ENCODE measurements at regions of chr17 and their contacts with region 1.

Region 1: GRCh38 chr17:40098846-40099618 is 1.4 kb downstream of the NR1D1 start:
- DNase-seq: peak; percentile 94 to 99 (median 97)
- ATAC-seq: peak; percentile 78
- H3K4me3 ChIP-seq: peak overlapping the region; percentile 97
- H3K4me3 Mint-ChIP-seq: peak overlapping the region; percentile 82 to 99 (median 97)
- H3K27ac ChIP-seq: peak overlapping the region; percentile 94
- H3K27ac Mint-ChIP-seq: peak overlapping the region; percentile 75 to 100 (median 95)
- H3K4me1 ChIP-seq: peaks cover 62 to 69% of the 10 kb centered on the region in 2 donors
- H3K4me1 Mint-ChIP-seq: peaks cover 68 to 96% (median 84%) of the 10 kb centered on the region in 7 donors
- H3K27me3 ChIP-seq: no peaks in the 10 kb centered on the region
- H3K27me3 Mint-ChIP-seq: peaks cover 0 to 6% (median 0%) of the 10 kb centered on the region in 5 donors

Region 2: DNA sequence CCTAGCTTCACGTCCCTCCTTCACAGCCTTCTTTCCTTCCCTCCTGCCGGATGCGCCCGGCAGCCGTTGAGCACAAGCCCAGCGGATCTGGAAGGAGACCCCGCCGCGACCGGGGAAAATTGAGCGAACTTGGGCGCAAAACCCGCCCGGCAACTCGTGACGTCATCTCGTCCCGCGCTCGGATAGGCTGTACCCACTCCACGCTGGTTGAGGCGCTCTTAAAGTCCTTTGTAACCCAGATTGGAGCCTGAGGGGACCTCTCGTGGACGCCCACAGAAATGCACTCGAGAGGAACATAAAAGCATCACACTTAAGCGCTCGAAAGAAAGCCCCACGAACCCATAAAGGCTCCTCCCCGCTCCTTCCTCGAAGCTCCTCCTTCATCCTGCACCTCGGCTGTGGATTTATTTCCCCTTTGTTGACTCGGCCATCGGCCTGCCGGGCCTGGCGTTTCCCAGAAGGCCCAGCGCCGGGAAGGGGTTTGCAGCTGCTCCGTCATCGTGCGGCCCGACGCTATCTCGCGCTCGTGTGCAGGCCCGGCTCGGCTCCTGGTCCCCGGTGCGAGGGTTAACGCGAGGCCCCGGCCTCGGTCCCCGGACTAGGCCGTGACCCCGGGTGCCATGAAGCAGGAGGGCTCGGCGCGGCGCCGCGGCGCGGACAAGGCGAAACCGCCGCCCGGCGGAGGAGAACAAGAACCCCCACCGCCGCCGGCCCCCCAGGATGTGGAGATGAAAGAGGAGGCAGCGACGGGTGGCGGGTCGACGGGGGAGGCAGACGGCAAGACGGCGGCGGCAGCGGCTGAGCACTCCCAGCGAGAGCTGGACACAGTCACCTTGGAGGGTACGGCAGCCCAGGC is 118.5 kb before region 1 on chr17 and contains the start of gene PSMD3:
- CTCF ChIA-PET with region 1: interaction called, 3 read pairs
- POLR2A ChIA-PET with region 1: interaction called, 3 read pairs
- intact Hi-C with region 1: loop called in 1 of 2 experiments (anchors 1 kb)
- DNase-seq: peak; percentile 86 to 99 (median 98)
- ATAC-seq: peak; percentile 97
- H3K4me3 ChIP-seq: peak within 1 kb of the TSS; percentile 63
- H3K4me3 Mint-ChIP-seq: peak within 1 kb of the TSS; percentile 89 to 97 (median 94)
- H3K27ac ChIP-seq: peak within 1 kb of the TSS; percentile 91
- H3K27ac Mint-ChIP-seq: peak within 1 kb of the TSS; percentile 89 to 96 (median 93)
- H3K4me1 ChIP-seq: peaks cover 17 to 23% of the 10 kb centered on the region in 2 donors
- H3K4me1 Mint-ChIP-seq: peaks cover 24 to 50% (median 46%) of the 10 kb centered on the region in 7 donors
- H3K27me3 ChIP-seq: no peaks in the 10 kb centered on the region
- H3K27me3 Mint-ChIP-seq: peaks cover 0 to 13% (median 0%) of the 10 kb centered on the region in 5 donors
- total RNA-seq, gene PSMD3: 55.7 to 111 (median 68.9) TPM

Region 3: DNA sequence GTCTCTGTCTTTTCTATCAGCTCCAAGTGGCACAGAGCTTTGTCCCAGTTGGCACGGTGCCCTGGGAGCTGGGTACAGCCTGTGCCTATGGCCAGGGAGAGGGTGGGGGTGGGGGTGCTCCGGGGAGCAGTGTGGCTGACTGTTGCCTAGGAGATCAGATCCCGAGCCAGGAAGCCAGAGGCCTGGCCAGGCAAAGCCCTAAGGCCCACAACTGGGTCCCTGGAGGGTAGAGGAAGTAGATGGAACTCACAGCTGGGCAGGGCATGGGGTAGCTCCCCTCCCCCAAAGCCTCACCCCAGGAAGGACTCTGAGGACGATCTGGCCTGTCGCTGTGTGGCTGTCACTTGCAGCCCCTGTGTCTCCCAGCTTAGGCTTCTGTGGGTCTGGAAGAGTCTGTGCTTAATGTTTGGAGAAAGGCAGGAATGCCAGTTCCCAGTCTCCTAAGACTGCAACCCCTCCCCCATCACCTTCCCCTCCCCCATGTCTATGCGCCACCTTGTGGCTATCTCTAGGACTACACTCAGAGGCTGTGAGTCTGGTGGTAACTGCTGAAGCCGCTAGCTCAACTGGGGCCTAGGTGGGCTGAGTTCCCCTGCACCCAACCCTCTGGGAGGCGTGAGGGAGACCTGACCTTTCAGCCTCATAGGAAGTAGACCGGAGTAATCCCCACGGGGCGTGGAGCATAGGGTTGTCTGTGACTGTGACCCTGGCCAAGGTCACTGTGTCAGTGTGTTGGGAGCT is 23.7 kb before region 1 on chr17:
- CTCF ChIA-PET with region 1: interaction called, 49 read pairs
- POLR2A ChIA-PET with region 1: interaction called, 25 read pairs
- intact Hi-C with region 1: loop called in 1 of 2 experiments (anchors 2 kb)
- DNase-seq: peak; percentile 45 to 80 (median 63)
- ATAC-seq: peak; percentile 93
- H3K4me3 ChIP-seq: no peak overlapping the region
- H3K4me3 Mint-ChIP-seq: peak overlapping the region in 8 of 10 donors; percentile 35 to 78 (median 71)
- H3K27ac ChIP-seq: peak overlapping the region; percentile 18
- H3K27ac Mint-ChIP-seq: peak overlapping the region in 8 of 9 donors; percentile 42 to 89 (median 68)
- H3K4me1 ChIP-seq: peaks cover 13 to 36% of the 10 kb centered on the region in 2 donors
- H3K4me1 Mint-ChIP-seq: peaks cover 7 to 67% (median 36%) of the 10 kb centered on the region in 7 donors
- H3K27me3 ChIP-seq: no peaks in the 10 kb centered on the region
- H3K27me3 Mint-ChIP-seq: no peaks in the 10 kb centered on the region

Region 4: DNA sequence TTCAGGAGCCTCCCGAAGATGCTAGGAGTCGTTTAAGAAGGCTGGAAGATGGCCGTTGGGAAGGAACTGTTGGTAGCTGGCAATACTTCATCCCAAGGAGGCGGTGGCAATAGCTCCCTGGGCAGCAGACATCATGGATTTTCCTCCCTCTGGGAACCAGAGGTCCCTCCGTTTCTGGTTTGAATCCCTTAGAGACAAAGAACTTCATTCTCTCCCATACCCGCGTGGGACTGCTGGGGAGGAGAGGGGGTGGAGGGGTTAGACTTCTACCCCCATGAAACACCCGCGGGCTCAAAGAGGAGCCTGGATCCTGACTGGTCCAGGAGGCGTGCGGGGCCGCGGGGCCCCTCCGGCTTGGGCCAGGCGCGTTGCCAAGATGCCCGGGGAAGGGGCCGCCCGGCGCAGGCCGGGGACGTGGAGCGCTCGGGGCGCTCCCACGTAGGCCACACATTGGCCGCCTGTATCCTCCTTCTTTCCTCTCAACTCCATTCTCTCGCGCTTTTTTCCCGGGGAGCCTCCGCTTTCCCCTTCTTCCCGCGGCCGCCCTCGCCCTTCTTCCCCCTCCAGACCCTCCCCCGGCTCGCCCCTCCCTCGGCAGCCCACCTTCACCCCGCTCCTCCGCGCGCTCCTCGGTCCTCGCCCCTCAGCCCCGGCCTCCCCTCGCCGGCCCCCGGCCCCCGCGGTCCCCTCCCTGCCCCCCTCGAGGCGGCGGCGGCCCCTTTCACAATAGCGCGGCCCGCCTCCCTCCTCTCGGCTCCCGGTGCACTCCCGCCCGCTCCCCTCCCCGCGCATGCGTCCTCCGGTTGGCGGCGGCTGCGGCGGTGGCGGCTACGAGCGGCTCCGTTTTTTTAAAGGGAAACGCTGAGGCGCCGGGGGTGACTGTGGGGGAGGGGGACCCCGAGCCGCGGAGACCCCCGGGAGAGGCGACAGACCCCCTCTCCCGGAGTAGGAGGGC is 22.4 kb after region 1 on chr17 and contains the start of gene MSL1:
- CTCF ChIA-PET with region 1: interaction called, 6 read pairs
- POLR2A ChIA-PET with region 1: interaction called, 291 read pairs
- intact Hi-C with region 1: loop called (anchors 1 kb)
- DNase-seq: peak; percentile 81 to 95 (median 86)
- ATAC-seq: peak; percentile 82
- H3K4me3 ChIP-seq: peak within 1 kb of the TSS; percentile 86
- H3K4me3 Mint-ChIP-seq: peak within 1 kb of the TSS; percentile 65 to 99 (median 86)
- H3K27ac ChIP-seq: peak within 1 kb of the TSS; percentile 82
- H3K27ac Mint-ChIP-seq: peak within 1 kb of the TSS; percentile 38 to 97 (median 84)
- H3K4me1 ChIP-seq: peaks cover 12 to 16% of the 10 kb centered on the region in 2 donors
- H3K4me1 Mint-ChIP-seq: peaks cover 32 to 47% (median 38%) of the 10 kb centered on the region in 7 donors
- H3K27me3 ChIP-seq: no peaks in the 10 kb centered on the region
- H3K27me3 Mint-ChIP-seq: no peaks in the 10 kb centered on the region
- total RNA-seq, gene MSL1: 97.0 to 145 (median 113) TPM

Region 5: DNA sequence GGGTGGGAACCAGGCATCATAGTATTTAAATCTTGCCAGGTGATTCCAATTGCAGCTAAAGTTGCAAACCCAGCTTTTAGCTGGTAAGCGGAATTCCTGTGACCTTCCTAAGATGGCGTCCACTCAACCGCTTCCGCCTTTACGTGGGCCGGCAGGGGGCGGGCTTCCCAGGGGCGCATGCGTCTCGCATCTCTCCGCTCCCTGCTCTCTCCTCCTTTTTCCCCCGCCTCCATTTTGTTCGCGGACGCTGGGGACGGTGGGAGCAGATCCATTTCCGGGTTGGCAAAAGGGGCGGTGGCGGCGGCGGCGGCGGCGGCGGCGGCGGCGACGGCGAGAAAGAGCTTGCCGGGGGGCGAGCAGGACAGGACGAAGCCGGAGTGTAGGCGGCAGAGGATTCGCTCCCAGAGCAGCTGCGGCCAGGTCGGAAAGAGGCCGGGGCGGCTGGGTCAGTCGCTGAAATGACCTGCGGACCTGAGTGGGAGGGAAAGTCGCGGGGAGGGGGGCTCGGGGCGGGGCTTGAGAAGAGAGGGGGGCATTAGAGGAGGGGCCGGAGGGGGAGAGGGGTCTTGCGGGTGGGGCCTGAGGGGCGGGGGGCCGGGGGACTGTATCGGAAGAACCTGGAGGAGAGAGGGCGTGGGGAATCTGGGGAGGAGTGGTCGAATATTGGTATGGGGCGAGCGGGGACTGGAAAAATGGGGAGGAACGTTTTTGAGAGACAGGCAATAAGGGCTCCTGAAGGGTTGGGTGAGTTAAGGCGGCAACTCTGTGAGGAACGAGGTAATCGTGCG is 120.2 kb after region 1 on chr17 and contains the start of gene WIPF2:
- CTCF ChIA-PET with region 1: no interaction called
- POLR2A ChIA-PET with region 1: interaction called, 4 read pairs
- intact Hi-C with region 1: loop called in 1 of 2 experiments (anchors 2 kb)
- DNase-seq: peak; percentile 88 to 97 (median 95)
- ATAC-seq: peak; percentile 96
- H3K4me3 ChIP-seq: peak within 1 kb of the TSS; percentile 74
- H3K4me3 Mint-ChIP-seq: peak within 1 kb of the TSS; percentile 86 to 100 (median 96)
- H3K27ac ChIP-seq: peak within 1 kb of the TSS; percentile 92
- H3K27ac Mint-ChIP-seq: peak within 1 kb of the TSS; percentile 96 to 100 (median 100)
- H3K4me1 ChIP-seq: peaks cover 9 to 10% of the 10 kb centered on the region in 2 donors
- H3K4me1 Mint-ChIP-seq: peaks cover 25 to 44% (median 32%) of the 10 kb centered on the region in 7 donors
- H3K27me3 ChIP-seq: no peaks in the 10 kb centered on the region
- H3K27me3 Mint-ChIP-seq: no peaks in the 10 kb centered on the region
- total RNA-seq, gene WIPF2: 24.8 to 31.8 (median 28.6) TPM

Region 6: GRCh38 chr17:40598663-40599467 is 499.8 kb after region 1 on chr17:
- CTCF ChIA-PET with region 1: no interaction called
- POLR2A ChIA-PET with region 1: no interaction called
- intact Hi-C with region 1: loop called in 1 of 2 experiments (anchors 10 kb)
- DNase-seq: peak in 8 of 9 donors; percentile 67 to 93 (median 80)
- ATAC-seq: peak; percentile 80
- H3K4me3 ChIP-seq: peak overlapping the region; percentile 25
- H3K4me3 Mint-ChIP-seq: peak overlapping the region; percentile 53 to 88 (median 76)
- H3K27ac ChIP-seq: peak overlapping the region; percentile 94
- H3K27ac Mint-ChIP-seq: peak overlapping the region; percentile 95 to 100 (median 99)
- H3K4me1 ChIP-seq: peaks cover 62 to 98% of the 10 kb centered on the region in 2 donors
- H3K4me1 Mint-ChIP-seq: peaks cover 64 to 100% (median 96%) of the 10 kb centered on the region in 7 donors
- H3K27me3 ChIP-seq: no peaks in the 10 kb centered on the region
- H3K27me3 Mint-ChIP-seq: no peaks in the 10 kb centered on the region

Measured in naive thymus-derived CD4-positive, alpha-beta T cell (primary cell).